ENCODE measurements at regions of chr13 and their contacts with region 1.

Region 1: DNA sequence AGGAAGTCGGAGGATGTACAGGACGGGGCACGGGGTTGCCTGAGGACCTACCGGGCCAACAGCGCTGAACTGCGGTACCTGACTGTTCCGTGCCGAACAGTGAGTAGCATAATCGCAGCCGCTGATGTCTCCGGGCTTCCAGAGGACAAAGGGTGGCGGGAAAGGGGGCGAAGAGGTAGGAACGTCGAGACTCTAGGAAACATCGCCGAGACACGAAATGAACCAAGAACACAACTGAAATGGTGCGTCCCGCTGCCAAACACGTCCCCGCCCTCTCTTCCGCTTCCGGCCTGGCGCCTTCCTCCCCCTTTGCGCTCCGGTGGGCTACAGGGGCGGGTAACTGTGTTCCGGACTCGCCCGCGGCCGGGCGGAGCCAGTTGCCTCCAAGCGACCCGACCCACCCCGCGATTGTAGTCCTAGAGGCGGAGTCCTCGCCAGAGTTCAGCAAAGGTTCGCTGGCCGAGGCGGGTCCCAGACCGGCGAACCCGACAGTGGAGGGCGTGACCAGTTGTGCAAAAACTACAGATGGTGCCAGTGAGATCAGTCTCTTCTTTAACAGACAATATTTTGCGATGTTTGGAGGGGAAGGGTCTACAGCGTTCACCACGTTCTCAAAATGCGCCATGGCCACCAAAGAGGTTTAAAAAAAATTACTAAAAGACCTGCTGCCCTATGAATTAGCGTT is at the start of gene MRPS31:
- DNase-seq: peak; percentile 96 to 97
- H3K4me3 ChIP-seq: peak within 1 kb of the TSS; percentile 84 to 89
- H3K27ac ChIP-seq: peak within 1 kb of the TSS; percentile 84 to 91
- H3K4me1 ChIP-seq: peaks cover 0 to 15% (median 7%) of the 10 kb centered on the region in 4 donors
- H3K27me3 ChIP-seq: no peaks in the 10 kb centered on the region
- CTCF ChIP-seq: no peak

Region 2: DNA sequence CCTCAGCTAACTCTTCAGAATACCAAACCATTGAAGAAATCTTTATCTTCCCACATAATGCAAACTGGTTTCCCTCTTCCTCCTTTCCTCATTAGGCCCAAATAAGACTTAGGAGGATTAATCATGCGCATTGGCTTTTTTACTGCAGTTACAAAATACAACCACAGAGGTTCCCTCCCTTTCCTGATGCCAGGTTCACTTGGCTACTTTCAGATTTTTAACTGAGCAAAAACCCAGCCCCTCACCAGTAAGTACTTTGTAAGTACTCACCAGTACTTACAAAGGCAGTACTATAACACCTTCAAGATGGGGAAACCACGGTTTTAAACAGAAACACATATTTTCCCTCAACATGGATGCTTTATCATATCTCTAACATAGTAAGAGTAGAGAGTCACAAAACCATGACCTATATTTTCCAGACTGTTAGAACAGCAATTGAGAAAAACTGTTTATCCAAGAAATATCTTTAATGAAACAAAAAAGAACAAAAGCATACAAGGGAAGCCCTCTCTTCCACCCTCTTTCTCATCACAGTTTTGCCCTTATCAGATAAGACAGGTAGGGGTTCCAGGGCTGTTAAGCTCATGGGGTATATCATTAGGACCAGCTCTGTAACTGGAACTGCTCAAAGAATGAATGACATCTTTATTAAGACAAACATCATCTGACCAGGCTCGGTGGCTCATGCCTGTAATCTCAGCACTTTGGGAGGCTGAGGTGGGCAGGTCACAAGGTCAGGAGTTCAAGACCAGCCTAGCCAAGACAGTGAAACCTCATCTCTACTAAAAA is 117.4 kb before region 1 on chr13:
- intact Hi-C with region 1: no loop called
- DNase-seq: no peak
- H3K4me3 ChIP-seq: no peak overlapping the region
- H3K27ac ChIP-seq: no peak overlapping the region
- H3K4me1 ChIP-seq: peaks cover 0 to 66% (median 23%) of the 10 kb centered on the region in 4 donors
- H3K27me3 ChIP-seq: no peaks in the 10 kb centered on the region
- CTCF ChIP-seq: no peak

Region 3: GRCh38 chr13:40749327-40749726 is 21.7 kb before region 1 on chr13:
- intact Hi-C with region 1: no loop called
- DNase-seq: no peak
- H3K4me3 ChIP-seq: no peak overlapping the region
- H3K27ac ChIP-seq: no peak overlapping the region
- H3K4me1 ChIP-seq: no peaks in the 10 kb centered on the region
- H3K27me3 ChIP-seq: no peaks in the 10 kb centered on the region
- CTCF ChIP-seq: no peak

Region 4: DNA sequence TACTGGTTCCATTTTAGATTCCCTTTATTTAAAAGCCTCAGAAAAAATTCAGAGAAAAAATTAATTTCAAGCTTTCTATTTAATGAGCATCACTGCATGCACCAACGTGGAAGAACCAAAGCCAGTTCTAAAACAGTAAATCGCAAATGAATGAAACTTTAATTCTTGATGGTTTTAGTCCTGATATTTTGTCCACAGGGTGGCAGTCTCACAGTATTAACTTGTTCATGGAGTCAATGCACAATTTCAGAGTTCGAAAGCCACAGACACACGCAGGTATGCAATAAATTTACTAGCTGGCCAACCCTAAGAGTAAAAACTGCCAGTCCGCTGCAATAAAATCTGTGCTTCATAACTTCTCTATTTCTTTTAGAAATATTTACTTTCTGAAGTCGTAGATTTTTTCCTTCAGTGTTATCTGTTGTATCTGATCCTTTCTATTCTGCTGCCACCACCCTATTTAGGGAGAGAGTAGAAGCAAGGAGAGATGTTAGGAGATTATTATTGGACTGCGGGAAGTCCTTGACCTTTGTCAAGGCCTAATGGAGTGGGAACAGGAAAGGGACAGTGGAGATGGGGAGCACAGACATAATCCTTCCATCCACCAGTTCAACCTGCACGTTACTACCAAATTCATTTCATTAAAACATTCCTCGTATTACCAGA is 283.3 kb after region 1 on chr13:
- intact Hi-C with region 1: loop called (anchors 10 kb)
- DNase-seq: no peak
- H3K4me3 ChIP-seq: no peak overlapping the region
- H3K27ac ChIP-seq: peak overlapping the region; percentile 59 to 73
- H3K4me1 ChIP-seq: peaks cover 0 to 93% (median 40%) of the 10 kb centered on the region in 4 donors
- H3K27me3 ChIP-seq: no peaks in the 10 kb centered on the region
- CTCF ChIP-seq: peak; percentile 36 to 47